Heart right ventricle (tissue), 16 donors: ENCODE measurements at regions of chr2 and their contacts with region 1.

Region 1: DNA sequence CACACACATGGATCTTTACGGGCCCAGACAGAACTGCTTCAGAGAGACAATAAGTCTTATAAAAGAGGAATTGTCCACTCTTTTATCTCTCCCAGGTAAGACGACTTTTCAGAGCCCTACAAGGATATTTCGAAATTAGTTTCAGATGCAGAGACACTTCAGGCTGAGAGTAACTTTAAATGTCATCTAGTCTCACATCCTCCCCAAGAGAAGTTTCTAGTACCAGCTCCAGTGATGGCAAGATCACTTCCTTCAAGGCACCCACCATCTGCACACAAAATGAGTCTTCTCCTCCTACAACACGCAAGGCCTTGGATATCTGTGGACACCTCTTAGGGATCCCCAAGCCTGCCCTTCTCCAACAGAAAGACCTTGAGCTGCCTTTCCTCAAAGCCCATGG is 39.0 kb upstream of the KLHL29 start:
- DNase-seq: no peak
- ATAC-seq: no peak
- H3K4me3 ChIP-seq: no peak overlapping the region
- H3K27ac ChIP-seq: no peak overlapping the region
- H3K4me1 ChIP-seq: peaks cover 0 to 8% (median under 1%) of the 10 kb centered on the region in 9 donors
- H3K27me3 ChIP-seq: peaks cover 0 to 14% (median 0%) of the 10 kb centered on the region in 7 donors
- CTCF ChIP-seq: no peak

Region 2: DNA sequence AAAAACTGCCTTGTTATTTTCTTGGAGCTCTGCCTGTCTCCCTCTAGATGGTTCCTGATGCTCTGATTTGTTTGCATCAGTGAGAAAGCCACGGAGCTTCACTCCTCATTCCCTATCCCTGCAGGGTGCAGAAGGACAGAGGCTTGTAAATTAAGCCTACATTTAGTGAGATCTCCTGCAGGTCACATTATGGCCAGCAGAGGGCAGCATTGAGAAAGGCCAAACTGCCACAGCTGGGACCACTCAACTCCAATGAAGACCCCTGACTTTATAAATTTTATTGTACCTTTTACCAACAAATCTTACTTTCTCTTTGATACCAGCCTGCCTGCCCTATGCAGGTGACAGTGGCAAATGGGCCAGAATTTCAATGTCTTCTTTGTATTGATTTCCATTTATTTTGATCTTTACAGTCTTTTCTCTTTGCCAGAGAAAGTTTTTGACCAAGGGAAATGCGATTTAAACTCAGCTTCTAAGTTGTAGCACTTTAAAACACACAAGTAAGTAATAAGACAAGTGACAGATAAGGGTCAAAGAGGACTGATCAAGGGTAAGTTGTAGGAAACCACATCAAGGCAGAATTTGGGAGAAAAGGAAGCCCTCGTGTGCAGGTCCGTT is 990.1 kb before region 1 on chr2:
- intact Hi-C with region 1: loop called in 1 of 10 experiments (anchors 5 kb)
- DNase-seq: peak; percentile 33 to 53
- ATAC-seq: peak in 3 of 8 donors; percentile 44 to 58 (median 46)
- H3K4me3 ChIP-seq: no peak overlapping the region
- H3K27ac ChIP-seq: no peak overlapping the region
- H3K4me1 ChIP-seq: no peaks in the 10 kb centered on the region
- H3K27me3 ChIP-seq: peaks cover 0 to 4% (median 0%) of the 10 kb centered on the region in 7 donors
- CTCF ChIP-seq: peak; percentile 64 to 86 (median 82)

Region 3: GRCh38 chr2:22904126-22904684 is 441.8 kb before region 1 on chr2:
- intact Hi-C with region 1: loop called in 3 of 10 experiments (anchors 5 to 10 kb)
- DNase-seq: peak; percentile 13 to 17
- ATAC-seq: peak in 1 of 8 donors; percentile 55
- H3K4me3 ChIP-seq: no peak overlapping the region
- H3K27ac ChIP-seq: no peak overlapping the region
- H3K4me1 ChIP-seq: no peaks in the 10 kb centered on the region
- H3K27me3 ChIP-seq: peaks cover 0 to 7% (median 0%) of the 10 kb centered on the region in 7 donors
- CTCF ChIP-seq: peak; percentile 9 to 64 (median 51)

Region 4: GRCh38 chr2:23414871-23415270 is 68.8 kb after region 1 on chr2:
- intact Hi-C with region 1: no loop called
- DNase-seq: no peak
- ATAC-seq: no peak
- H3K4me3 ChIP-seq: no peak overlapping the region
- H3K27ac ChIP-seq: no peak overlapping the region
- H3K4me1 ChIP-seq: no peaks in the 10 kb centered on the region
- H3K27me3 ChIP-seq: no peaks in the 10 kb centered on the region
- CTCF ChIP-seq: no peak